HepG2 (cell line): ENCODE measurements at regions of chr17 and their contacts with region 1.

Region 1: DNA sequence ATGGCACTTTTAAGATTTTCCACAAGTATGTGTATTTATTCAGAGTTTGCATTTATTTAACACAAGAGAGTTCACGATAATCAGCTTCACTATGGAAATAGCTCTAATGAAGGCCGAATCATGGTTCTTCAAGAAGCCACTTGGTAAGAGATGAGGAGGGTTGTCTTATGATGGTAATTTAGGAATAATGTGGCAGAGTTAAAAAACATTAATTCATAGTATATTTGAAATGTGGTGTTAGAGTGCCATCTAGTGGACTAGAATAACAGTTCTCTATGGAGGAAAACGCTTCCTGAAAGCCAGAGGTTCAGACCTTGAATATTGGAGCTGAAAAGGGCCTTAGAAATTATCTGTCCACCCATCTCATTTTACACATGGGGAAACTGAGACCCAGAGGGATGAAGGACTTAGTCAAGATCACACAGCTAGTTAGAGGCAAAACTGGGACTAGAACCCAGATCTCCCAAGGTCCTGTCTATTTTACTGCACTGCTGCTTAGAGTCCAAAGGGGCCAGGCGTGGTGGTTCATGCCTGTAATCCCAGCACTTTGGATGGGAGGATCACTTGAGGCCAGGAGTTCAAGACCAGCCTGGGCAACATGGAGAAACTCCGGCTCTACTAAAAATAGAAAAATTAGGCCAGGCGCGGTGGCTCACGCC is 33.8 kb upstream of the KPNB1 start:
- DNase-seq: peak; percentile 52
- ATAC-seq: peak; percentile 62
- H3K4me3 ChIP-seq: no peak overlapping the region
- H3K27ac ChIP-seq: no peak overlapping the region
- H3K4me1 ChIP-seq: 0 out of 2 replicates have a peak, but pooled peaks cover 10% of the 10 kb centered on the region
- H3K27me3 ChIP-seq: no peaks in the 10 kb centered on the region
- CTCF ChIP-seq: peak; percentile 73
- EP300 ChIP-seq: no peak
- POLR2A ChIP-seq: no peak
- RAD21 ChIP-seq: peak; percentile 54

Region 2: GRCh38 chr17:47229535-47230443 is 386.1 kb before region 1 on chr17:
- CTCF ChIA-PET with region 1: interaction called, 5 read pairs
- POLR2A ChIA-PET with region 1: no interaction called
- in situ Hi-C with region 1: no loop called
- intact Hi-C with region 1: loop called (anchors 10 kb)
- DNase-seq: peak; percentile 79
- ATAC-seq: peak; percentile 86
- H3K4me3 ChIP-seq: peak overlapping the region; percentile 44 to 62 (median 46)
- H3K27ac ChIP-seq: no peak overlapping the region
- H3K4me1 ChIP-seq: peaks cover 35% of the 10 kb centered on the region
- H3K27me3 ChIP-seq: peaks cover 1 to 16% of the 10 kb centered on the region in 2 experiments; a peak in 2 of 5 replicates
- CTCF ChIP-seq: peak; percentile 99
- EP300 ChIP-seq: no peak
- POLR2A ChIP-seq: no peak
- RAD21 ChIP-seq: peak; percentile 98

Region 3: DNA sequence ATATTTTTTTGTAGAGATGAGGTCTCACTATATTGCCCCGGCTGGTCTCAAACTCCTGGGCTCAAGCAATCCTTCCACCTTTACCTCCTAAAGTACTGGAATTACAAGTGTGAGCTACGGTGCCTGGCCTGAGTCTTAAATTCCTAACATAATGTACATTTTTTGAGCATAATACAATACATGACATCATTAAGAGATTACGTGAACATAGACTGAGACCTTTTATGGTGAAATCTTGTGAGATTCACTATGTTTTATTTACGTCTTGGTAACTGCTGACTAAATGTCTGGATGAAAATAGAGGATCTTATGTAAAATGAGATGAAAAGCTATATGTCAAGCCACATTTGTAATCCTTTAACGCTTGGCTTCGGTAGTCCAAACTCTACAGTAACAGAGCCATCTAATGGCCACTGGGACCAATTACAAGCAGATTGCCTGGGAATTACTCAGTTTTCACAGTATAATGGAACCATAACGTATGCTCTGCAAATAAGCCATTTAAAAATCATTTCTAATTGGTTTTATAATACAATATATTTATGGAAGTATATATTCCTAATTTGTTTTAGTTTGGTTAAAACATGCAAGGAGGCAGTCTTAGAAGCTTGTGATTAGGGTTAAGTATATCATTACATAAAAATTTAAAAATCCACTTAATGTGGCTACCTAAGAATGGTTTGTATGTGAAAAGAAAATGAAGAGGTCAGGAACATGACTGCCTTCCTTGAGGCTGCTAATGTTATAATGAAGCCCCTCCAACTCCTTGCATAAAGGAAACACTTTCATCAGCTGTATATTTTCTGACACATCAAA is 300.2 kb before region 1 on chr17:
- CTCF ChIA-PET with region 1: no interaction called
- POLR2A ChIA-PET with region 1: no interaction called
- in situ Hi-C with region 1: no loop called
- intact Hi-C with region 1: loop called (anchors 2 kb)
- DNase-seq: peak; percentile 71
- ATAC-seq: peak; percentile 69
- H3K4me3 ChIP-seq: no peak overlapping the region
- H3K27ac ChIP-seq: no peak overlapping the region
- H3K4me1 ChIP-seq: peaks cover 35% of the 10 kb centered on the region
- H3K27me3 ChIP-seq: no peaks in the 10 kb centered on the region
- CTCF ChIP-seq: peak; percentile 90
- EP300 ChIP-seq: no peak
- POLR2A ChIP-seq: no peak
- RAD21 ChIP-seq: peak; percentile 85

Region 4: GRCh38 chr17:47363171-47363570 is 252.7 kb before region 1 on chr17:
- CTCF ChIA-PET with region 1: interaction called, 11 read pairs
- POLR2A ChIA-PET with region 1: no interaction called
- in situ Hi-C with region 1: loop called (anchors 25 kb)
- intact Hi-C with region 1: loop called (anchors 10 kb)
- DNase-seq: no peak
- ATAC-seq: no peak
- H3K4me3 ChIP-seq: no peak overlapping the region
- H3K27ac ChIP-seq: no peak overlapping the region
- H3K4me1 ChIP-seq: no peaks in the 10 kb centered on the region
- H3K27me3 ChIP-seq: no peaks in the 10 kb centered on the region
- CTCF ChIP-seq: no peak
- EP300 ChIP-seq: no peak
- POLR2A ChIP-seq: no peak
- RAD21 ChIP-seq: no peak

Region 5: GRCh38 chr17:47368262-47368661 is 247.6 kb before region 1 on chr17:
- CTCF ChIA-PET with region 1: no interaction called
- POLR2A ChIA-PET with region 1: no interaction called
- in situ Hi-C with region 1: loop called (anchors 25 kb)
- intact Hi-C with region 1: loop called (anchors 10 kb)
- DNase-seq: no peak
- ATAC-seq: no peak
- H3K4me3 ChIP-seq: no peak overlapping the region
- H3K27ac ChIP-seq: no peak overlapping the region
- H3K4me1 ChIP-seq: no peaks in the 10 kb centered on the region
- H3K27me3 ChIP-seq: no peaks in the 10 kb centered on the region
- CTCF ChIP-seq: no peak
- EP300 ChIP-seq: no peak
- POLR2A ChIP-seq: no peak
- RAD21 ChIP-seq: no peak

Region 6: DNA sequence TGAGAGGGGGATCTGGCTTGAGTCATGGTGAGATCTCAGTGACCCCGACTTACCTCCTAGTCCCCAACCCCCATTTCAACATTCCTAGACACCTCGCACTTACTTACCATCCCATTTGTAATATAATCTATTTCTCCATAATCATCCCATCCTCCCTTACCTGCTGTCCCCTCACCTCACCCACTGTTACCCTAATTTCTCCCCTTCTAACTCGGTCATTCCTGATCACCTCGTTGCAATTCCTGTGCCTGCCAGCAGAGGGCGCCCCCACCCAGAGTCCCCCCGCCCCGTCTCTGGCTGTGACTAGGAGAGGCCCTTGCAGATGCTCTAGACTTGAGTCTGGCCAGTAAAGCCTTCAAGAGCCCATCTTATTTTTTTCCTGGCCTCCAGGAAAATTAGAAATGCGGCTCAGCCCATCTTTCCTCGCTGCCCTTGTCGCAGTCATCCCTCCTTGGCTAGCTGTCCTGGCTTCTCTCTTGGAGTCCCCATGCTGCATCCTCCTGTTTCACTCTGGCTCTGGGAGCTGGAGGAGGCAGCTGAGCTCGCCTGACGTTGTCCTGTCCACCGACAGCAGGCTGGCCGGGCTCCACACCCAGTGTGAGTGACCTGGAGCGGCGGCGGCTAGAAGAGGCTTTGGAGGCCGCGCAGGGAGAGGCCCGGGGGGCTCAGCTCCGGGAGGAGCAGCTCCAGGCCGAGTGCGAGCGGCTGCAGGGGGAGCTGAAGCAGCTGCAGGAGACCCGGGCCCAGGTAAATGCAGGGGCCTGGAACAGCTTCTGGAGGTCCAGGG is 83.0 kb after region 1 on chr17:
- CTCF ChIA-PET with region 1: no interaction called
- POLR2A ChIA-PET with region 1: no interaction called
- in situ Hi-C with region 1: no loop called
- intact Hi-C with region 1: no loop called
- DNase-seq: no peak
- ATAC-seq: peak; percentile 51
- H3K4me3 ChIP-seq: no peak overlapping the region
- H3K27ac ChIP-seq: no peak overlapping the region
- H3K4me1 ChIP-seq: peaks cover 18% of the 10 kb centered on the region
- H3K27me3 ChIP-seq: no peaks in the 10 kb centered on the region
- CTCF ChIP-seq: peak; percentile 87
- EP300 ChIP-seq: no peak
- POLR2A ChIP-seq: no peak
- RAD21 ChIP-seq: peak; percentile 55; the same call in 1 of the 2 replicates